Kidney (tissue), 22 donors: ENCODE measurements at regions of chr7 and their contacts with region 1.

Region 1: DNA sequence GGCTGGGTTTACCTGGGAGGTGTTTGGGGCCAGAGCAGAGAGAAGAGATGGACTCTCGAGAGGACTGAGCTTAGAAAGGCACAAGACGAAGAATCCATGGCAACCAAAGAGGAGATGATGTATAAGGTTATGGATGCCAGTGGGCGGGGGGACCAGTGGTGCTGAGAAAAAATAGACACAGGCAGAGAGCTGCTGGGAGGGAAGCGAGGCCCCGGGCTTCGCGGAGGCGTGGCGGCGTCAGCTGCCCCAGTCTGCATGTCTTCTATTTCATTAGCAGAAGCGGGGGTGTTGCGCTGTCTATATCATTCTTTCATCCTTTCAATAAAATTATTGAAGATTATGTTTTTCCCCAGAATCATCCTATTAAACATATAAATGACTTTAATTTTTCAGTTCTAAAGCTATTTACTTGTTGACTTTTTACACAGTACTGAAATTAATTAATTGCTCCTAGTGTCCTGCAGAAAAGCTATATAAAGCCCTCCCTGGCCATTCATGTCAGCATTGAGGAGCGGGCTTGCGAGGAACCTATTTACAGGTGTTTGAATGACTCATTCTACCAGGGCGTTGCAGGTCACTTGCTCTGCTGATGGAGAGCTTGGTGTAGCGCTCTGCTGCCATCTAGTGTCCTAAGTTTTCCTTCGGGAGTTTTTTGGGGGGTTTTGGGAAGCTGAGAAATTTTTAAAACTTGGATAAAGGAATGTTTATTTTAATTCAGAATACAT is 42.9 kb upstream of the BHLHA15 start:
- DNase-seq: peak in 4 of 5 donors; percentile 63 to 84 (median 79)
- H3K4me3 ChIP-seq: no peak overlapping the region
- H3K27ac ChIP-seq: no peak overlapping the region
- H3K4me1 ChIP-seq: peaks cover 0 to 9% (median 6%) of the 10 kb centered on the region in 3 donors
- H3K27me3 ChIP-seq: no peaks in the 10 kb centered on the region
- CTCF ChIP-seq: peak; percentile 55

Region 2: DNA sequence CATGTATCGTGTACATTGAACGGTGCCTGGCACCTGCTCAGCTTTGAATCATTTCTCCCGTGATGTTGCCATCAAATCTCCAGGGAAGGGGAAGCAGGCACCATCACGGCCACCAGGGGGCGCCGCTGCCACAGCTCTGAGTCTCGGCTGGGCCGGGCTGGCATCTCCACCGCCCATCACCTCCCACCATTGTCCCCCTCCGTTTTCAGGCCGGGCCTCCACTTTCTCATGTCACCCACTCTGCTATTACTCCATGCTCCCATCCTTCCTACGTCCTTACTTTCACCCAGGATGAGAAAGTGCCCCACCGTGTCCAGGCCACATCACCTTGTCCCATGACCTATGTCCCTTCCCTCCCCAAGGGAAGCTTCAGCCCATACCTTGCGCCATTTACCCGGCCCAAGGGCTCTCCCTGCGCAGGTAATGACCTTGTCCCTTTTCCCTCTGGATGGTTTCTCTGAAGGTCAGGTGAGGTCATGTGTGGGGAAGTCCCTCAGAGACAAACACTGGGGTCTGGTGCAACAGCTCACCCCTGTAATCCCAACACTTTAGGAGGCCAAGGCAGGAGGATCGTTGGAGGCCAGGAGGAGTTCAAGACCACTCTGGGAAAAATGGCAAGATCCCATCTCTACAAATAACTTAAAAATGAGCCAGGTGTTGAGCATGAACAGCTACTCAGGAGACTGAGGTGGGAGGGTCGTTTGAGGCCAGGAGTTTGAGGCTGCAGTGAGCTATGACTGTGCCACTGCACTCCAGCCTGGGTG is 146.6 kb before region 1 on chr7:
- intact Hi-C with region 1: loop called (anchors 5 kb)
- DNase-seq: peak; percentile 58 to 87 (median 77)
- H3K4me3 ChIP-seq: no peak overlapping the region
- H3K27ac ChIP-seq: no peak overlapping the region
- H3K4me1 ChIP-seq: no peaks in the 10 kb centered on the region
- H3K27me3 ChIP-seq: no peaks in the 10 kb centered on the region
- CTCF ChIP-seq: peak; percentile 83

Region 3: GRCh38 chr7:98106647-98107445 is 61.5 kb before region 1 on chr7 and contains the start of gene LMTK2:
- intact Hi-C with region 1: loop called (anchors 10 kb)
- DNase-seq: peak; percentile 95 to 99 (median 97)
- H3K4me3 ChIP-seq: peak within 1 kb of the TSS; percentile 77 to 86 (median 80)
- H3K27ac ChIP-seq: peak within 1 kb of the TSS; percentile 45 to 88
- H3K4me1 ChIP-seq: peaks cover 0 to 5% (median 5%) of the 10 kb centered on the region in 3 donors
- H3K27me3 ChIP-seq: no peaks in the 10 kb centered on the region
- CTCF ChIP-seq: peak; percentile 98
- total RNA-seq, gene LMTK2: 24.8 TPM

Region 4: DNA sequence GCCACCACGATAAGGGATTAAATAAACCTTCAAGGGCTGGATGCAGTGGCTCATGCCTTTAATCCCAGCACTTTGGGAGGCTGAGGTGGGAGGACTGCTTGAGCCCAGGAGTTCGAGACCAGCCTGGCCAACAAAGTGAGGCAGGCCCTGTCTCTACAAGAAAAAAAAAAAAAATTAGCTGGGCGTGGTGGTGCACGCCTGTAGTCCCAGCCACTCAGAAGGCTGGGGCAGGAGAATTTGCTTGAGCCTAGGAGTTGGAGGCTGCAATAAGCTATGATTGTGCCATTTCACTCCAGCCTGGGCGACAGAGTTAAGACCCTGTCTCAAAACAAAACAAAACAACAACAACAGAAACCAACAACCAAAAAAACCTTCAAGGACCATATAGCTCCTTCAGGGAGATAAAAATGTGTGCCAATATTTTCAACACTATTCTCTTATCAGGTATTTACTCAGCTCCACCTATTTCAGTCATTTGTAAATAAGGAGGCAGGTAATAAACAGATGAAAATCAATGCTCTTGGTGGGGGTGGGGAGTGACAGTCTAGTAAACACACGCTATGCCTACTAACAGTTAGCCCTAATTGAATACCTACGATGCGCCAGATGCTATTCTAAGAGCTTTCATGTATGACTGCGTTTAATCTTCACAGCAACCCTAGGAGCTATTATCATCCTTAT is 219.3 kb after region 1 on chr7:
- intact Hi-C with region 1: no loop called
- DNase-seq: no peak
- H3K4me3 ChIP-seq: no peak overlapping the region
- H3K27ac ChIP-seq: no peak overlapping the region
- H3K4me1 ChIP-seq: no peaks in the 10 kb centered on the region
- H3K27me3 ChIP-seq: no peaks in the 10 kb centered on the region
- CTCF ChIP-seq: no peak